ENCODE measurements at regions of chr4 and their contacts with region 1.

Region 1: DNA sequence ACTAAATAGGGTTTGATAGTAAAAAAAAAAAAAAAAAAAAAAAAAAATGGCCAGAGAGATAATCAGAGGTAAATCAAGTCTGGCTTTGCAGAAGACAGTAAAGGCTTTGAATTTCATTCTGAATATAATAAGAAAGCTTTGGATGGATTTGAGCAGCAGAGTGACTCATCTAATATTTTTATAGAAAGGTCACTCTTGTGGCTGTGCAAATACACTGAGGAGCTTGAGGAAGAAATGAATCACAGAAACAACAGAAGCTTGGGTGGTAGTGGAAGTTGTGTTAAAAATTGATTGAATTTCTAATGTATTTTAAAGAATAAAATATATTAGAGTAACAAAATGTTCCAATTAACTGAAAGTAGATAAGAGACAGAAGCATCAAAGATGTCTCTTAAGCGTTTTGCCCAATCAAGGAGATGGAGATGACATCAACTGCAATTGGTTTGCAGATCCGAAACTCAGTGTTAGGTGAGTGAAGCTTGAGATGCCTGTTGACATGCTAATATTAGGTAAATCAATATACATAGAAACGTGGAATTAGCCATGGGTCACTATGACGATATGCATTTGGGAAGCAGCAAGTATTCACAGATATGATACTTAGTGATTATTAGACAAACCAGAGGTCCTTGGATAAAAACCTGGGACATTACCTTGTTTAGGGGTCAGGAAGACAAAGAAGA is 280.5 kb downstream of the GPM6A start:
- DNase-seq: no peak
- H3K4me3 ChIP-seq: no peak overlapping the region
- H3K27ac ChIP-seq: no peak overlapping the region
- H3K4me1 ChIP-seq: no peaks in the 10 kb centered on the region
- H3K27me3 ChIP-seq: no peaks in the 10 kb centered on the region
- CTCF ChIP-seq: no peak
- POLR2A ChIP-seq: no peak

Region 2: DNA sequence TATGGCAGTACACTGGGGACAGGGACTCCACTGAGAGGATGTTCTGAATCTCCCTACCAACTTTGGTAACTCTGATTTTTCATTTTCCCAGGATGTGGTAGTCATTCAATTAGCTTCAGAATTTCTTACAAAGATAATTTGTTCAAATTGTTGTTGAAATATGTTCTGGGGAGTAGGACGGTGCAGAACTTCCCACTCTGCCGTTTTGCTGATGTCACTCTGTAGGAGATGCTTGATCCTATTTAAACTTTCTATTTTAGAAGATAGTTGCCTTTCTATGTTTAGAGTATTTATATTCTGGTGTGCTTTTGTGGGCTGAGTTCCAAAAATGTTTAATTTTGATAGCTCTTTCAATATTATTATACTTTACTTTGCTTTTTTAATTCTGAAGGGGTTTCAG is 558.2 kb before region 1 on chr4:
- intact Hi-C with region 1: loop called (anchors 5 kb)
- DNase-seq: no peak
- H3K4me3 ChIP-seq: no peak overlapping the region
- H3K27ac ChIP-seq: no peak overlapping the region
- H3K4me1 ChIP-seq: no peaks in the 10 kb centered on the region
- H3K27me3 ChIP-seq: no peaks in the 10 kb centered on the region
- CTCF ChIP-seq: no peak
- POLR2A ChIP-seq: no peak

Region 3: DNA sequence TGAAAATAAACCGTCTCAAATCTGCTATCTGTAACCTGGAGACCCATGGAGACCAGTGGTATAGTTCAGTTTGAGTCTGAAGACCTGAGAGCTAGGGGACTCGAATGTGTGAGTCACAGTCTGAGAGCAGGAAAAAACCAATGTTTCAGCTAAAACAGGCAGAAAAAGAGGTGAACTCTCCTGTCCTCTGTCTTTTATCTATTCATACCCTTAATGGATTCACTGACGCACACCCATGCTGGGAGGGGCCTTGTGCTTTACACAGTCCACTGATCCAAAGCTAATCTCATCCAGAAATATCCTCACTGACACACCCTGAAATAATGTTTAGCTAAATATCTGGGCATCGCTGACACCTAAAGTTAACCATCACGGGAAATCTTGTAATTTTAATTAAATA is 17.4 kb before region 1 on chr4:
- intact Hi-C with region 1: loop called (anchors 1 kb)
- DNase-seq: no peak
- H3K4me3 ChIP-seq: no peak overlapping the region
- H3K27ac ChIP-seq: no peak overlapping the region
- H3K4me1 ChIP-seq: no peaks in the 10 kb centered on the region
- H3K27me3 ChIP-seq: no peaks in the 10 kb centered on the region
- CTCF ChIP-seq: no peak
- POLR2A ChIP-seq: no peak

Region 4: DNA sequence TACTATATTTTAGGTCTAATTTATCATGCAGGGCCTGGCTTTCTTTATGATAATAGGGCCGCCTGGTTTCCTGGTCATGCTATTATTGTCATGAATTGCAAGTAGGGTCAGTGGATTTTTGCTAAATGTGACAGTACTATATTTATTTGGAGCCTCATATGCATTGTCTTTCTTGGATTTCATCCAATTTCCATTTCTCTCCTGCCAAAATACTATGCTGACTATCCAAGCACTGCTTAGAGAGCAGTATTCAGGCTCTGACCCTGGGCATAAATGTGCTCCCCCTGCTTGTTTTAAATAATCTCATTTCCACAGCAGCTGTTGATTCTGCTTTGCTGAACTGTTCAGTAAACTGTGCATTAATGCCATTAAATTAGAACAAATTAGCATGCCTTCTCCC is 11.2 kb after region 1 on chr4:
- intact Hi-C with region 1: no loop called
- DNase-seq: no peak
- H3K4me3 ChIP-seq: no peak overlapping the region
- H3K27ac ChIP-seq: no peak overlapping the region
- H3K4me1 ChIP-seq: no peaks in the 10 kb centered on the region
- H3K27me3 ChIP-seq: no peaks in the 10 kb centered on the region
- CTCF ChIP-seq: no peak
- POLR2A ChIP-seq: no peak

Measured in breast epithelium (tissue), 4 donors.